GM23248 (cell line): ENCODE measurements at regions of chr20 and their contacts with region 1.

Region 1: DNA sequence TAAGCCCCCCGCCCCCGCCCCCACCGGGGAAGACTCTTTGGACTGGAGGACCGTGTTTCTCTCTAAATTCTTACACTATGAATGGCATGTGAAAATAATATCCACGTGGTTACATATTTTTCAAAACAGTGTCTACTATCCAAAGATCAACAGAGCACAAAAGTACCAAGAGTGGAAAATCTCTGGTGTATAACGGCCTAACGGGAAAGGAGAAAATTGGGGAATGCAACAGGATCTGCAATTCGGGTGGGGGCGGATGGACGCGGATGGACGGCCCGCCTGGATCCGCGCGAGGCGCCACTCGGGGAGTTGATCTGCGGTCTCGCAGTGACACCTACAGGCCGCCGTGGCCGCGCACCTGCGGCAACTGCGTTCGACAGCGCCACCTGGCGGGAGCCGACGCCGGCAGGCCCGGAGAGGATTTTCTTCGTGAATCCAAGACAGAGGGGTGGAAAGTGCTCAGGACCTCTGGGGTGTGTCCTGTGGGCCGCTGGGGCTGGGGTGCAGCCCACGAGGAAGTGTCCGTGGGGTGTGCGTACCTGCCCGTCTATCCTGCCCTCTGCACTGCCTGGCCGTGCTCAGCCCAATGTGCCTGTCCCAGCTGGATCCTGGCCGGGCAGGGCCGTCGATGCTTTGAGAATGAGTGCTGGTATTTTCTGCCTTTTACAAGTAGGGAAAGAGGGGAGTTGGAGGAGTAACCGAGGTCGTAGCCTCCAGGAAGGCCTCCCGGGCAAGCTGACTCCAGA is 18.6 kb downstream of the ANKRD60 start:
- DNase-seq: peak; percentile 86
- H3K4me3 ChIP-seq: no peak overlapping the region
- H3K27ac ChIP-seq: no peak overlapping the region
- H3K4me1 ChIP-seq: no peaks in the 10 kb centered on the region
- H3K27me3 ChIP-seq: peaks cover 19% of the 10 kb centered on the region

Region 2: DNA sequence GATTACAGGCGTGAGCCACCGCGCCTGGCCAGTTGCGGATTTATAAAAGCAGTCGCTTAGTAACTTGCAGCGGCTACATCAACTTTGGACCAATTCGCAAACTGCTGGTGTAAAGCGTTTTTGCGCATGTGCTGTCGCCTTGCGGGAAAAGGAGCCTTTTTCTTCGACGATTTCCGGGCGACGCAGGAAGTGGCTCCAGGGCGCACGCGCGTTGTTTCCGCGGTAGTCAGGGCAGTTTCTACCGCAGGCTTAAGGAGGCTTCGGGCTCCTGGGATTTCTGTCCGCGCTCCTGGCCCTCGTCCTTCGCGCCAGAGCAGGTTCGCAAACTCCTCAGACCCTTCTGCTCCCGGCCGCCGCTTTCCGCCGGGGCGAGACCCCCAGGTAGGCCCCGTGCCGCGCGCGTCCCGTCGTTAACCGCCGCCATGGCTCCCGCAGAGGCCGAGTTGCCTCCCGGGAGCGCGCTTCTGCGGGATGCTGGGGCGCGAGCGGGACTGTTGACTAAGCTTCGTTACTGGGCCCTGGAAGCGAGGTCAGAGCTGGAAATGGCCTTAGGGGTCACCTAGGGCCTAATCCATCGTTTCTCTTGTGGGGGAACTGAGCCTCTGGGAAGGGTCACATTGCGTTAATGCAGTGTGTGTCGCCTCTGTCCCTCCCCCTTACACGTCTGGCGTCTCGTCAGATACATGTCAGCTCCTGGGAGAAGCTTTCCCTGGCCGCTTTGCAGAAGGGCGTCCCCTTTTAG is 858.6 kb before region 1 on chr20 and contains the start of gene RAE1:
- in situ Hi-C with region 1: no loop called
- DNase-seq: peak; percentile 99
- H3K4me3 ChIP-seq: peak within 1 kb of the TSS; percentile 95
- H3K27ac ChIP-seq: peak within 1 kb of the TSS; percentile 88
- H3K4me1 ChIP-seq: peaks cover 31% of the 10 kb centered on the region
- H3K27me3 ChIP-seq: no peaks in the 10 kb centered on the region
- total RNA-seq, gene RAE1: 21.5 and 34.7 TPM in 2 replicates

Region 3: GRCh38 chr20:57388953-57389694 is 820.7 kb before region 1 on chr20:
- in situ Hi-C with region 1: loop called (anchors 10 kb)
- DNase-seq: peak; percentile 78
- H3K4me3 ChIP-seq: peak overlapping the region; percentile 58
- H3K27ac ChIP-seq: no peak overlapping the region
- H3K4me1 ChIP-seq: no peaks in the 10 kb centered on the region
- H3K27me3 ChIP-seq: no peaks in the 10 kb centered on the region

Region 4: GRCh38 chr20:57514273-57514751 is 695.5 kb before region 1 on chr20:
- in situ Hi-C with region 1: loop called (anchors 5 kb)
- DNase-seq: peak; percentile 86
- H3K4me3 ChIP-seq: no peak overlapping the region
- H3K27ac ChIP-seq: no peak overlapping the region
- H3K4me1 ChIP-seq: no peaks in the 10 kb centered on the region
- H3K27me3 ChIP-seq: peaks cover 28% of the 10 kb centered on the region

Region 5: DNA sequence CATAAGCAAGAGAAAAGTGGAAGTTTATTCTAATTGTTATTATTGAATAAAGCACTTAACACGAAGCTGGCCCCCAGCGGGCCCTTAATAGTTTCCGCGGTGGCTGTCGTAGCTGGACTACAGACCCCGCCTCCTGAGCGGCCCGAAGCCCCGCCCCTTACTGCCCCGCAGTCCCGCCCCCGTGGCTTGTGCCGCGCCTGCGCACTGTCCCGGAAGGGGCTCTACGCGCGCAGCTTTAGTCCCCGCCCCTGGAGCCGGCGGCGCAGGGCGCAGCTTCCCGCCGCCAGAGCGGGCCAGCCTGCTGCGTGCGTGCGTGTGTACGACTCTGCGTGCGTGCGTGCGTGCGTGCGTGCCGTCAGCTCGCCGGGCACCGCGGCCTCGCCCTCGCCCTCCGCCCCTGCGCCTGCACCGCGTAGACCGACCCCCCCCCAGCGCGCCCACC is 179.1 kb after region 1 on chr20 and contains the start of gene VAPB:
- in situ Hi-C with region 1: no loop called
- DNase-seq: peak; percentile 99
- H3K4me3 ChIP-seq: peak within 1 kb of the TSS; percentile 89
- H3K27ac ChIP-seq: peak within 1 kb of the TSS; percentile 86
- H3K4me1 ChIP-seq: peaks cover 29% of the 10 kb centered on the region
- H3K27me3 ChIP-seq: no peaks in the 10 kb centered on the region
- total RNA-seq, gene VAPB: 8.8 and 10.0 TPM in 2 replicates